Activated CD4-positive, alpha-beta T cell treated with anti-CD3 and anti-CD28 coated beads, Interleukin-2, amount 10 ng/mL, durations not matched to agents 24 days and 14 days (primary cell): ENCODE measurements at regions of chr14 and their contacts with region 1.

Region 1: DNA sequence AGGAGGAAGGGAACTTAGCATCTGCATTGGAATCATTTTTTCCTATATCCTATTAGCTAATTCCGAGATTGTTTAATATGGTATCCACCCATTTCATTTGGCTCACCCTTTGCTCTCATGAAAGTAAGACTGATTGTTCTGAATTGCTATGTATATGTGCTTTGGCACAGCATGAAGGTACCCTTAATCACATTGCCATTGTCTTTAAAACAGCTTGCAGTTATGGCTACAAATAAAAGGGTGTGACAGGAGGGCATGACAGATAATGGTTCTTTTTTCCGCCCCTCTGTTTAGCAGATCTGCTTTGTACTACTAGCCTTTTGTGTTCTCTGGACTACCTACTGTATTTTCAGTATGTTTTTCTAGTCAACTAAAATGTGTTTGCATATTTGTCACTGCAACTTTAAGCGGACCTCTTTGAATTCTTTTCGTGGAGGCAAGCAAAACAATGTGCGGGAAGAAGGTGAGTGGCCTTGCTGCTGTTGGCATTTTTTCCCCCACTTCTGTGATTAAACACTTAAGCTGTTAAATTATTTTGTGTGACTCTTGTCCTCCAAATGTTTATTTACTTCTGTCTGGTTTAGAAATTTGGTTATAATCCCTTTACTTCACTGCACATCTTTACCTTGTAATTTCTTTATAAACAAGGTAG is 35.8 kb downstream of the FBXO34 start:
- DNase-seq: no peak
- H3K4me3 Mint-ChIP-seq: no peak overlapping the region
- H3K27ac Mint-ChIP-seq: no peak overlapping the region
- H3K4me1 Mint-ChIP-seq: peaks cover 17% of the 10 kb centered on the region
- H3K27me3 Mint-ChIP-seq: no peaks in the 10 kb centered on the region

Region 2: DNA sequence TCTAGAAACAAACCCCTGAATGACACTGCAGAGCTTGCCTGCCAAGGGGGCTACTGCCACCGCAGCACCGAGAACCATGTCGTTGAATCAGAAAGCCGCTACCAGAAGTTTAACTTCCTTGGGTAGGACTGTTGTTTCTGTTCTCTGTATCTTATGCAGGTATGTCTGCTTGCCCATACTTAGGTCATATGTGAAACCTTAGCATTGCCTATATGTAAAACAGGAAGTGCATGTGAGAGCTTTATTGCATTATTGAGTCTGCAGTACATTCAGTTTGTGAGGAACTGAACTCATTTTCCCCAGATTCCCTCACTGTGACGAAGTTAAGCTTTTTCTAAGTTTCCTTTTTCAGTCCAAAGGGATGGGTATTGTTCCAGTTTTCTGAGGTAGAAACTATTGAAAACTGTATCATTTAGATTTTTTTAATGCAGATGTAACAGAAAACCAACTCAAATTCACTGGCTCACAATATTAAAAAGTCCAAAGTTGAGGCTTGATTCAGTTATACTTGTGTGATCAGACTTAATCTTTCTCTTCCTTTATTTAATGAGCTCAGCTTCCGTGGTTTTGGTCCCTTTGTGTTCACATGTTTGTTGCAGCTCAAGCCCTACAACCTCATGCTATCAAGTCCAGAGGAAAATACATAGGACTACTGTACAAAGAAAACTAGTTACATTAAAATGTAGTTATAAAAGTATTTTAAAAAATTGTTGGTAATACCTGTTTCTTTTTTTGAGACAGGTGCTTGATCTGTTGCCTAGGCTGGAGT is 28.9 kb before region 1 on chr14:
- intact Hi-C with region 1: loop called (anchors 5 kb)
- DNase-seq: peak; percentile 67
- H3K4me3 Mint-ChIP-seq: peak overlapping the region; percentile 58
- H3K27ac Mint-ChIP-seq: peak overlapping the region; percentile 68
- H3K4me1 Mint-ChIP-seq: peaks cover 50% of the 10 kb centered on the region
- H3K27me3 Mint-ChIP-seq: no peaks in the 10 kb centered on the region

Region 3: GRCh38 chr14:55327179-55327578 is 20.1 kb after region 1 on chr14:
- intact Hi-C with region 1: loop called (anchors 2 kb)
- DNase-seq: no peak
- H3K4me3 Mint-ChIP-seq: no peak overlapping the region
- H3K27ac Mint-ChIP-seq: peak overlapping the region; percentile 3
- H3K4me1 Mint-ChIP-seq: peaks cover 45% of the 10 kb centered on the region
- H3K27me3 Mint-ChIP-seq: no peaks in the 10 kb centered on the region

Region 4: GRCh38 chr14:55354500-55354899 is 47.4 kb after region 1 on chr14:
- intact Hi-C with region 1: no loop called
- DNase-seq: peak; percentile 89
- H3K4me3 Mint-ChIP-seq: peak overlapping the region; percentile 70
- H3K27ac Mint-ChIP-seq: peak overlapping the region; percentile 93
- H3K4me1 Mint-ChIP-seq: peaks cover 33% of the 10 kb centered on the region
- H3K27me3 Mint-ChIP-seq: no peaks in the 10 kb centered on the region